BJ (cell line): ENCODE measurements at regions of chr5 and their contacts with region 1.

Region 1: DNA sequence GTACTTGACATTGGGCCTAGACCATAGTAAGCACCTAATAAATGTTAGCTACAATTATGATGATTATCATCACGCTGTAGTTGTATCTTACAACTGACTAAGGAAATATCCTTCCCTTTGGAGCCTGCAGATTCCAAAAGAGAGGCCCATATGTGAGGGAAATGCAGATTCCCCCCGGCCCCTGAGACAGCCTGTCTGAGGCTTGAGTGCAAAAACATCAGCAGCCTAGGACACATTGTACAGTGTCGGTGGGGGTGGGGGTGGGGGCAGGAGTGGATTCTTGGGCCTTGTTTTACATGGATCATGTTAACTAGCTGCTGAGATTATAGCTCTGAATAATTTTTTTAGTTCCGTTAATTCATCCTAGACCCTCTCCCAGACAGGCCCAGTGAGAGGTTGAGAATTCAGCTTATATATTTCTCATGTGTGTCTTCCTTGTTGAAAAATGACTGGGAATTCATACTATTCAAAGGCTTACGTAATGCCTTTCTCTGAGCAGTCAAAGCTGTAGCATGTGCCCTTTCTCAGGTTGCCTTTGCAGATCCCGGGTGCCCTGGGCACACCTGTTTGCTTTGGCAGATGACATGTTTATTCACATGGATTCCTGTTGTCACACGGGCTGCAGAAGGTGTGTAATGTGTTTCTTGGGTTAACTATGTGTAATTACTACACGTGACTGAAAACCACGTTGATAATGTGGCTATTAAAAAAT is 262.8 kb downstream of the NR3C1 start:
- DNase-seq: no peak
- H3K4me3 ChIP-seq: no peak overlapping the region
- H3K27me3 ChIP-seq: no peaks in the 10 kb centered on the region
- CTCF ChIP-seq: no peak

Region 2: DNA sequence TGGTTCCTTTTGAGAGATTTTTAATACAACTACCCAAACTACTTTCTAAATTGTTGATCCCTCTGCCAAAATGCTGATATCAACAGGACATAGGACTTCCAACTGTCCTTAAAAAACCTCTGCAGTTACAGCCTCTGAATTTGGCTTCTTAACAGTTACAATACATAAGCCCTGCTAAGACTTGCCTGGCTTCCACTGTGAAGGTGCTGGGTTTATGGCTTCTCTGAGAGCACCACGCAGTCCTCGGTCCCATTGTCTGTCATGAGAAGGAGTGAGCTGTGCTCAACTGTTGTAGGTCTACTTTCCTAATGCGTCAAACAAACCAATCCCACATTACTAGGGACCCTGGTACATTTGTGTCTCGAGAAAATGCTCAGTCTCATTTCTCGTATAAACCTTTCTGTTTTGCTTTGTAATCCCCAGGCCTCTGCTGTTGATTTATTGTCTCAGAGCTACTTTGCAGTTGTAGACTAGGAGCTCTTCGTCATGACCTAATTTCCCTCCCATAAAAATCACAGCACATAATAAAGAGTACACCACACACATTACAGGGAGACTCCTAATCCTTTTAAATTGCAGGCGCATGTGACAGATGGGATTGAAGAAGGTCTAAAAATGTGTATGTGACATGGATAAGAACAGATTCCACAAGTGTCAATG is 12.1 kb before region 1 on chr5:
- CTCF ChIA-PET with region 1: interaction called, 13 read pairs
- POLR2A ChIA-PET with region 1: no interaction called
- DNase-seq: no peak
- H3K4me3 ChIP-seq: no peak overlapping the region
- H3K27me3 ChIP-seq: no peaks in the 10 kb centered on the region
- CTCF ChIP-seq: no peak

Region 3: DNA sequence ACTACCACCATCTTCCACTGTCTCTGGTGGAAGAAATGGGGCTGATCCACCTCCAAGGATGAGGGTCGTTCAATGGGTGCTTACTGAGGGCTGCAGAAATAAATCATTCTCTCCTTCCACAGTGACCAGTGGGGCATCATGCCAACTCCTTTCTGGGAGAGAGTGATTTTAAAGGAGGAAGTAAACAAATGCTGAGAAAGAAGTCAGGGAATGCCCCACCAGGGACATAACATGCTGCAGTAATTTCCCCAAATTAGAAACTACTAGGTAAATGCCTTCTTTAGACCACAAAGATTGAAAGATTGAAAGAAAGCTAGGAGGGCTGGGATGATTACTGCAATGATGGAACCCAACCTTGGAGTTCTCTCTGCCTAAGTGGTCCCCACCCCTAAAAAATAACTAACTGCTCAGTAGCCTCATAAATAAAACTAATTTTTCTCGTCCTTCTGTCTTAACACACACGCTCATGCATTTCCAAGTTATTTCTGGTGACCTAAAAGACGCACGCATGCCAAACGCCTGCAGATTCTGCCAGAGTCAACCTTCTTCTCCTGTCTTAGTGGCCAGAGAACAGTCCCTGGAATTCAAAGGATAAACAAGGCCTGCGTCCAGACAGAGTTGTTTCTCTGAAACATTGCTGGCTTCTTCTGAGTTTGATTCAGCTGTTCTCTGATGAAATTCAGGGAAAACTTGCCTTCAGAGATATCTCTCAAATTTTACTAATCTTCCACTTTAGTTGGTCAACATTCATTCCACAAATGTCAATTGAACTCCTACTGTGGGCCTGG is 12.9 kb after region 1 on chr5:
- CTCF ChIA-PET with region 1: no interaction called
- POLR2A ChIA-PET with region 1: no interaction called
- DNase-seq: peak; percentile 75
- H3K4me3 ChIP-seq: no peak overlapping the region
- H3K27me3 ChIP-seq: no peaks in the 10 kb centered on the region
- CTCF ChIP-seq: no peak